H1 (cell line): ENCODE measurements at regions of chr10 and their contacts with region 1.

Region 1: DNA sequence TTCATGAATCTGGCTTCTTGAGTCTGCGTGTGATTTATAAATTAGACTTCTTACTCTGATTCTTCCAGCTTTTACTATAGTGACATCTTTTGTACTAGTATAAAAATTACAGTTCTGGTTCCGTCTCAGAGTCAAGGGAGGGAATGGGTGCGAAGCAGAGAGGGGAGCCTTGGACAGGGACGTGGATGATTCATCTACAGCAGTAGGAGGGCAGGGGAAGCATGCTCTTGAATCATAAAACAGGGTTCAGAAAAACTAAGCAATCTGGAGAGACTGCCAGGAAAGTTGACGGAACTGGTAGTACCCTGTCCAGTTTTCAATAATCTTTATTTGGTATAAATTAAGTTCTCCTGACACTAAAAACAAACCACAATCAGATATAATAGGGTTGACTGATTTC is 58.1 kb downstream of the ITGA8 start:
- DNase-seq: no peak
- H3K4me3 ChIP-seq: no peak overlapping the region
- H3K27ac ChIP-seq: no peak overlapping the region
- H3K4me1 ChIP-seq: no peaks in the 10 kb centered on the region
- H3K27me3 ChIP-seq: no peaks in the 10 kb centered on the region
- CTCF ChIP-seq: no peak
- EP300 ChIP-seq: no peak
- POLR2A ChIP-seq: no peak
- RAD21 ChIP-seq: no peak

Region 2: DNA sequence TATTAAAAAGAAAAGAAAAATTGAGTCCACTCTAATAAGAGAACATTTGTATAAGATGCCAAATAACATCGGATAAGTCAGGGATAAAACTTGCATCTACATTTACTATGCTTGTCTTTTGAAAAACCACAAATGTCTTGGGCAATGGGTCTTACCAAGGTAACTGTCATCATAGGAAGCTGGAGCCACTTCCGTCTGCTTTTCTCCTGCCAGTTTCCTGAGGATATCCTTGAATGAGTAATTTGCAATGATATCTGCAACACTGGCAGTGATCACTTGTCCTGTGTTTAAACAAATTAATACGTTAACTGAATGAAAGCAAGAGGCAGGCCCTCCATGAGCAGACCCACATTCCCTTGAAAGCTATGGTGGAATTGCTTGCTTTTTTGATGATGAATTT is 10.9 kb after region 1 on chr10:
- CTCF ChIA-PET with region 1: interaction called, 14 read pairs
- POLR2A ChIA-PET with region 1: no interaction called
- DNase-seq: no peak
- H3K4me3 ChIP-seq: no peak overlapping the region
- H3K27ac ChIP-seq: no peak overlapping the region
- H3K4me1 ChIP-seq: no peaks in the 10 kb centered on the region
- H3K27me3 ChIP-seq: no peaks in the 10 kb centered on the region
- CTCF ChIP-seq: no peak
- EP300 ChIP-seq: no peak
- POLR2A ChIP-seq: no peak
- RAD21 ChIP-seq: no peak